ENCODE measurements at regions of chr10 and their contacts with region 1.

Region 1: DNA sequence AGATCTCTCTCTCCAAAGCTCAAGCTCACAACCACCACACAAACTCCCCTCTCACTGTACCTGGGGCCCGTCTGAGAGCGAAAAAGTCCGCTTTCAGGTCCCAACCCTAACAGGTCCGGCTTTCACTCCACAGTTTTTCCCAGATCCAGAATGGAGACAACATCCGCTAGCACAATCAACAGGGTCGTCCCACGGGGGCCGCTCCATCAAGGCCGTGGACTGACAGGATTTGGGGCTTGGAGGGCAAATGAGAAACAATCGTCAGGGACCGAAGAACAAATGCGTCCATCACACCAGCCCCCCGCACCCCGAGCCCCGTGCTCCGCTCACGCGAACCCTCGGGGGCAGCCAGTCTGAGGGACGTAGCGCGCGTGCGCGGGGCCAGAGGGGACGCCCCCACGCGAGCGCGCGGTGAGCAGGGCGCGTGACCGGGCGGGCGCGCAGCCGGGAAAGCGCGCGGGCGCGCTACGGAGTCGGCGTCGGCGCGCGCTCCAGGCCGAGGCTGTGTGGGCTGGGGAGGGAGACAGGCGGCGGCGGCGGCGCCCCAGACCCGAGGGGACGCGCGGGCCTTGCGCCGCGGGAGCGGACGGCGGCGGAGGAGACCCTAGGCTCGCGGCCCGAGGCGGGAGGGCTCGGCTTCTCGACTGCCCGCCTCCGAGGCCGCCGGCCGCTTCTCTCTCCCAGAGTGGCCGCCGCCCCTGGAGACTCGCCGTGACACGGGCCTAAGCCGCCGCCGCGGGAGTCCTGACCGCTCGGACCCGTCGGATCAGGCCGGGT is at the start of gene SLK:
- DNase-seq: peak; percentile 36 to 70
- H3K4me3 ChIP-seq: peak within 1 kb of the TSS; percentile 99
- H3K27ac ChIP-seq: peak within 1 kb of the TSS; percentile 56
- H3K4me1 ChIP-seq: peaks cover 17% of the 10 kb centered on the region
- H3K27me3 ChIP-seq: no peaks in the 10 kb centered on the region
- CTCF ChIP-seq: no peak
- total RNA-seq, gene SLK: 24.0 and 30.4 TPM in 2 replicates

Region 2: DNA sequence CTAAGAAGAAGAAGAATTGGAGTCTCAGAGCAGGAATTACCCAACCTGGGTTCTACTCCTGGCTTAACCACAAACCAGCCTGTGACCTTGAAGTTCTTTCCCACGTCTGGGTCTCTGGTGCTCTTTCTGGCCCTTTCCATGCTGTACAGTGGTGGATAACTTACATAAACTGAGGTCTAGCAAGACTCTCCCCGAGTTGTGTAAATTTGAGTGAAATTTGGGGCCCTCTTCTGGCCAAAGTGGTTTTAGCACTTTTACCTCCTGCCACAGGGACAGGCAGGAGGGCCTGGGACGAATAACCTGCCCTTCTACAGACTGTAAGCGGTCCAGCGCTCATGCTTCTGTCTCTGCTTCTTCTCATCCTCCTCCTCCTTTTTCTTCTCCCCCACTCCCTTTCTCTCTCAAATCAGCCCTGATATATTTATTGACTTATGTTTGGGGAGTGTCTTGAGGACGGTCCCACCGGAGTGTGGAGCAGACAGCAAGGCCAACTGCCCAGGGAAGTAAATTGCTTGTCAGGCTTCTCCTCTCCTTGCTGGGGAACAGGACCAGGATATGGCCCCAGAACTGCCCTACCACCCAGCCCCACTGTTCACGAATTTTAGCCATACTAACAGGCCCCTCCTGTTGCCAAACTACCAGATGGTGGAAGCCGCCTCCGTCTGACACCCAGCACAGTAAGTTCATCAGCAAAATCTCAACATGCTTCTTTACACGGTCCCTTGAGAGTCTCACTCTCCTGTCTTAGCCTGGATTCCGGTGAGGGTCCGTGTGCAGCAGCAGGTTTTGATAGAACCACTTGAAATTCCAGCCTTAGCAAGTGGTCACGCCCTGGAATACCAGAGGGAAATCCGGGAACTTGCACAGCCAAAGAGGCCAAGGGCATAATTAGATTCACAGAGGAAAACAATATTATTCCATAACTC is 107.4 kb before region 1 on chr10:
- CTCF ChIA-PET with region 1: no interaction called
- POLR2A ChIA-PET with region 1: no interaction called
- intact Hi-C with region 1: no loop called
- DNase-seq: peak in 1 of 2 experiments; percentile 50
- H3K4me3 ChIP-seq: no peak overlapping the region
- H3K27ac ChIP-seq: no peak overlapping the region
- H3K4me1 ChIP-seq: peaks cover 2% of the 10 kb centered on the region; the same call in 1 of the 2 replicates
- H3K27me3 ChIP-seq: no peaks in the 10 kb centered on the region
- CTCF ChIP-seq: peak; percentile 75

Region 3: DNA sequence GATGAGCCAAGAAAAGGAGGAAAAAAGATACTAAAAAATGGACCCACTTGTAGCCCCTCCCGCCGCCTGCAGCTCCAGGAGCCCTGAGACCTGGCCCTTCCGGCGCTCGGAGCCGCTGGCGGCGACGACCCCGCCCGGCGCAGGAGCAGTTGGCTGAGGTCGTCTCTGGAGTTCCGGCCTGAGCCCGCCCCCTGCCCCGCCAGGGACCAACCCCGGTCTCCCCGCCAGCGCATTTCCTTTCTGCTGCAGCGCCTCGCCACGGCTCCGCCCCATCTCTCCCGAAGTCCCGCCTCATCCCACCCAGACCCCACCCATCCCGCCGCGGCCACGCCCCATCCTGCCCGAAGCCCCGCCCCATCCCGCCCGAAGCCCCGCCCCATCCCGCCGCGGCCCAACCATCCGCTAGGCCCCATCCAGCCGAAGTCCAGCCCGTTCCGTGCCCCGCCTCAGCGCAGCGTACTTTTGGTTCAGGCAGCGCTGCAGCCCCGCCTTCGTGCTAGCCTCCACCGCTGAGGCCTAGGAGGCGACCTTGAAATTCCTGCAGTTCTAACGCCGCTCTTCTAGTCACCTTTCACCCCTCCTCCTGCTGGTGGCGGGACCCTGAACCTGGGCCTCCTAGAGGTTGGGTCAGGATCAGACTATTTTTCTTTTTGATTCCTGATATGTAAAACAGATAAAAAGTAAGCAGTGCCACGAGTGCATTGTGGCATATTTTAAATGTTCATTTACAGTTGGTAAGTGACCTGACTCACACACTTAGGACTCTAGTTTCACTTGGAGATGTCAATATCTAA is 48.6 kb before region 1 on chr10 and contains the start of gene STN1:
- CTCF ChIA-PET with region 1: no interaction called
- POLR2A ChIA-PET with region 1: interaction called, 5 read pairs
- intact Hi-C with region 1: loop called (anchors 5 kb)
- DNase-seq: peak; percentile 80 to 94
- H3K4me3 ChIP-seq: peak within 1 kb of the TSS; percentile 87
- H3K27ac ChIP-seq: peak within 1 kb of the TSS; percentile 77
- H3K4me1 ChIP-seq: peaks cover 32% of the 10 kb centered on the region
- H3K27me3 ChIP-seq: no peaks in the 10 kb centered on the region
- CTCF ChIP-seq: no peak
- total RNA-seq, gene STN1: 20.5 and 25.4 TPM in 2 replicates